ENCODE measurements at regions of chr4 and their contacts with region 1.

Region 1: DNA sequence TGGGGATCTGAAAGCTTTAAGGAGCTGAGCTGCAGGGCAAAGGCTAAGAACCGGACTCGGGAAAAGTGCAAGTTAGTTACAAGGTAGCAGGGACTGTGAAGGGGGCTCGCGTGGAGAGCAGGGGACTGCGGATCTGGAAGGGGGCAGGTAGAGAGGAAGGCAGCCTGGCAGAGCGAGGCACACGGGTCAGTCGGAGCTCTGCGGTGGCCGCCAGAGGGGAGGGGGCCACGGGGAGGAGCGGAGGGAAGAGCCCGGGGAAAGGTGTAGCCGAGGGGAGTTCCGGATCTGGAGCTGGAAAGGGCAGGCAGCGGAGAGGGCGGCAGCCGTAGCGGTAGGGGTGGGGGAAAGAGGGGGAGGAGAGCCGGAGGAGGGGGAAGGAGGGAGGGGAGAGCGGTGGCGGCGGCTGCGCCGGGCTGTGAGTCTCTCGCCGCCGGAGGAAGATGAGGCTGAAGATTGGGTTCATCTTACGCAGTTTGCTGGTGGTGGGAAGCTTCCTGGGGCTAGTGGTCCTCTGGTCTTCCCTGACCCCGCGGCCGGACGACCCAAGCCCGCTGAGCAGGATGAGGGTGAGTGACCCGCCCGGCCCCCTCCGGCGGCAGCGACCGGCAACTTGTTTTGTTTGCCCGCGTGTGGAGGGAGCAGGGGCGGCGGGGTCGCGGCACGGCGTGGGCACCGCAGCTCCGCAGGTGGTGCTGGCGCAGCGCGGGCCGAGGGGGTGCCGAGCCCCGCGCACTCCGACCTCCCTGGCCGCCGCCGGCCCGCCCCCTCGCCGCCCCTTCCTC is at the start of gene GALNT7:
- DNase-seq: peak; percentile 81 to 88
- ATAC-seq: peak; percentile 78
- H3K4me3 ChIP-seq: peak within 1 kb of the TSS; percentile 77 to 83
- H3K27ac ChIP-seq: peak within 1 kb of the TSS; percentile 66 to 79
- H3K4me1 ChIP-seq: peaks cover 0 to 3% of the 10 kb centered on the region in 2 donors
- H3K27me3 ChIP-seq: no peaks in the 10 kb centered on the region
- total RNA-seq, gene GALNT7: 20.3 to 29.8 TPM

Region 2: DNA sequence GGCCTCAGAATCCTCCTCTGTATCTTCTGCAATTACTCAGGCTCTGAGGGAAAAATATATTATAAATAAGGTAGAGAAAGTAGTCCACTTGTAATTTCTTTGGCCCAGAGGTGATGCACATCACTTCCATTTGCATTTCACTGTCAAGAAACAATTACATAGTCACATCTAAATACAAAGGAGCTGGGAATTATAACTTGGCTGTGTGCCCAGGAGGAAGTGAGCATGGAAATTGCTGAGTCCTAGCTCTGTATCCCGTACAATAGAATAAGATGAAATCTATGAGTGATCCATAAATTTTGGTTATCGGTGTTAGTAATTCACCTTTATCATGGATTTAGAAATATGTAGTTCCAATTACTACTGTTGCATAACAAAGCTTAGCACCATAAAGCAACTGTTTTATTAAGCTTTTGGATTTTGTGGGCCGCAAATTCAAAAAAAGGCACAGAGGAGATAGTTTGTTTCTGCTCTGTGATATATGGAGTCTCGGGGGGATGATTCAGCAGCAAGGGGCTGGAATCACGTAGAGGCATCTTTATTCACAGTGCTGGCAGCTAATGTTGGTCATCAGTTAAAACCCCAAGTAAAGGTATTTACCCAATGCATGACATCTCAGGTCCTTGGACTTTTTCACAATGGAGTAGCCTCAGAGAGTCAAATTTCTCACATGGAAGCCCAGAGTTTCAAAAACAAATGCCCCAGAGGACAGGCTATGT is 241.3 kb before region 1 on chr4:
- intact Hi-C with region 1: no loop called
- DNase-seq: no peak
- ATAC-seq: no peak
- H3K4me3 ChIP-seq: no peak overlapping the region
- H3K27ac ChIP-seq: no peak overlapping the region
- H3K4me1 ChIP-seq: peaks cover 0 to 3% of the 10 kb centered on the region in 2 donors
- H3K27me3 ChIP-seq: no peaks in the 10 kb centered on the region

Region 3: DNA sequence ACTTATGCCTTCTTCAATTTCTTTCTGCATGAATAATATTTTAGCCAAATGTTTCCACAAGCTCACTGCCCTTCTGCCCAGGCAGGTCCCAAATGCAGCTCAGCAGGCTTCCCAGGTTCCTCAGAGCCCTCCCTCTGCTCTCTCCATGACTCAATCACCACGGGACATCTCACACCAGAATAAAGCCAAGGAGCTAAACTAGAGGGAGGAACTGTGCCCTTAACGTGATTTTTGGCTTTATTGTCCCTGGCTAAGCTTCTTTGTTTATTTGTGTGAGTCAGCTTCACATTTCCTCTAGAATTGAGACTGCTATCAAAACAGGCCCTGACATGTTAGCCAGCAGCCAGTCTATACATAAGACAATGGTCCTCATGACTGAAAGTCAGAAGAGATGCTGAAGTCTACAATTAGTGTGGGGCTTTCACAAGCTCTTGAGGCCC is 186.4 kb before region 1 on chr4:
- intact Hi-C with region 1: no loop called
- DNase-seq: peak in 1 of 2 donors; percentile 61
- ATAC-seq: peak; percentile 83
- H3K4me3 ChIP-seq: no peak overlapping the region
- H3K27ac ChIP-seq: peak overlapping the region; percentile 43 to 85
- H3K4me1 ChIP-seq: peaks cover 0 to 1% of the 10 kb centered on the region in 2 donors
- H3K27me3 ChIP-seq: no peaks in the 10 kb centered on the region

Region 4: GRCh38 chr4:173237152-173237551 is 68.6 kb after region 1 on chr4:
- intact Hi-C with region 1: no loop called
- DNase-seq: no peak
- ATAC-seq: no peak
- H3K4me3 ChIP-seq: no peak overlapping the region
- H3K27ac ChIP-seq: no peak overlapping the region
- H3K4me1 ChIP-seq: peaks cover 0 to 2% of the 10 kb centered on the region in 2 donors
- H3K27me3 ChIP-seq: no peaks in the 10 kb centered on the region

Region 5: DNA sequence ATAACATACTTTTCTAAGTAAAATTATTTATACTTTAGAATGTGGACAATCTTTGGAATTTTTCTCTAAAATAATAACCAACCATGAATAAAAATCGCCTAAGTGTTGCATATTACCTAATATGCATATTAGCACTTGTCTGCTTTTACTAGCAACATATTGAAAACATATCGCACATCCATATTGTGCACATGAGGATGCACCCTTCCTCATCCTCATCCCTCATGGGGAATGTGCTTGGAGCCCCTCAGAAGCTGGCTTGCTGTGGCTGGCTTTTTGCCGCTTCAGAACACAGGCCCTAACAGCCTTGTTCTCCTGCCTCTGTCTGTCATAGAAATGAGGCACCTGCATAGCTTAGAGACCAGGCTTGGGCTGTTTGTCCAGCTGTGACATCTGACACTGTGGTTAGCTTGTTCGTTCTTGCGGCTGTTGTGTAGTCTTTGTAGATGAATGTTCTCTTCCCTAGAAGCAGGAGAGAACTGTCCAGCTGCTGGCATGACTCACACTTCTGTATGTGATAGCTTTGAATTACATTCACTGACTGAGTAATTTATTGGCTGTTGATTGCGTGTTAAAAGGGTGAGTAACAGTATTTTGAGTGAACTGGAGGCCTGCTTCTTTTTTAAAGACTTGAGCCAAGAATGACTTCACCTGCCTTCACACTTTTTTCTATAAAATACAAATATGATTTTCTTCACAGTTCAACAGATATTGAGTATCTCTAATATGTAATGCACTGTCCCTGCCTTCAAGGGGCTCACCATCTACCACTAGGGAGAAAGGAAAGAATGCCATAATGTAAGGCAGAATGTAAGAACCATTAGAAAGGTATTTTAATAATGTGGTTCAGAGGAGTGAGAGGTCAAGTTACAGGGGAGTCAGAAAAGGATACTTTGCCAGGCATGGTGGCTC is 83.7 kb after region 1 on chr4:
- intact Hi-C with region 1: loop called in 1 of 2 experiments (anchors 5 kb)
- DNase-seq: peak; percentile 70 to 77
- ATAC-seq: peak; percentile 71
- H3K4me3 ChIP-seq: no peak overlapping the region
- H3K27ac ChIP-seq: no peak overlapping the region
- H3K4me1 ChIP-seq: peaks cover 0 to 7% of the 10 kb centered on the region in 2 donors
- H3K27me3 ChIP-seq: no peaks in the 10 kb centered on the region

Region 6: GRCh38 chr4:173478201-173478912 is 309.8 kb after region 1 on chr4:
- intact Hi-C with region 1: no loop called
- DNase-seq: no peak
- ATAC-seq: no peak
- H3K4me3 ChIP-seq: no peak overlapping the region
- H3K27ac ChIP-seq: peak overlapping the region; percentile 40 to 64
- H3K4me1 ChIP-seq: peaks cover 2 to 5% of the 10 kb centered on the region in 2 donors
- H3K27me3 ChIP-seq: no peaks in the 10 kb centered on the region